Stomach (tissue), 19 donors: ENCODE measurements at regions of chr13 and their contacts with region 1.

Region 1: DNA sequence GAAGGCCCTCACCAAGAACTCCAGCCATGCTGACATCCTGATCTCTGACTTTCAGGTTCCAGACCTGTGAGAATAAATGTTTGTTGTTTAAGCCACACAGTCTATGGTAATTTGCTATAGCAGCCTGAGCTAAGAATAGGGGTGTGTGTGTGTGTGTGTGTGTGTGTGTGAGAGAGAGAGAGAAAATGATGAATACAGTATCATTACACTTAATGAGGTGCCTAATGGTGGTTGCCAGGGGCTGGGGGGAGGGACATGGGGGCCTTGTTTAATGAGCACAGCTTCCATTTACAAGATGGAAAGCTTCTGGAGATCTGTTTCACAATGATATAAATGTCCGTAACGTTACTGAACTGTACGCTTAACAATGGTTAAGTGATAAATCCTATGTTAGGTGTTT is 53.8 kb upstream of the LATS2 start:
- DNase-seq: peak in 1 of 2 donors; percentile 21
- H3K4me3 ChIP-seq: no peak overlapping the region
- H3K27ac ChIP-seq: no peak overlapping the region
- H3K4me1 ChIP-seq: no peaks in the 10 kb centered on the region
- H3K27me3 ChIP-seq: no peaks in the 10 kb centered on the region
- CTCF ChIP-seq: no peak
- EP300 ChIP-seq: no peak
- POLR2A ChIP-seq: no peak

Region 2: GRCh38 chr13:20945952-20946383 is 169.3 kb before region 1 on chr13:
- intact Hi-C with region 1: loop called (anchors 10 kb)
- DNase-seq: peak in 1 of 2 donors; percentile 54
- H3K4me3 ChIP-seq: peak overlapping the region in 3 of 4 donors; percentile 19 to 26 (median 25)
- H3K27ac ChIP-seq: no peak overlapping the region
- H3K4me1 ChIP-seq: peaks cover 7 to 21% (median 13%) of the 10 kb centered on the region in 4 donors
- H3K27me3 ChIP-seq: peaks cover 0 to 17% (median 10%) of the 10 kb centered on the region in 3 donors
- CTCF ChIP-seq: no peak
- EP300 ChIP-seq: no peak
- POLR2A ChIP-seq: no peak

Region 3: DNA sequence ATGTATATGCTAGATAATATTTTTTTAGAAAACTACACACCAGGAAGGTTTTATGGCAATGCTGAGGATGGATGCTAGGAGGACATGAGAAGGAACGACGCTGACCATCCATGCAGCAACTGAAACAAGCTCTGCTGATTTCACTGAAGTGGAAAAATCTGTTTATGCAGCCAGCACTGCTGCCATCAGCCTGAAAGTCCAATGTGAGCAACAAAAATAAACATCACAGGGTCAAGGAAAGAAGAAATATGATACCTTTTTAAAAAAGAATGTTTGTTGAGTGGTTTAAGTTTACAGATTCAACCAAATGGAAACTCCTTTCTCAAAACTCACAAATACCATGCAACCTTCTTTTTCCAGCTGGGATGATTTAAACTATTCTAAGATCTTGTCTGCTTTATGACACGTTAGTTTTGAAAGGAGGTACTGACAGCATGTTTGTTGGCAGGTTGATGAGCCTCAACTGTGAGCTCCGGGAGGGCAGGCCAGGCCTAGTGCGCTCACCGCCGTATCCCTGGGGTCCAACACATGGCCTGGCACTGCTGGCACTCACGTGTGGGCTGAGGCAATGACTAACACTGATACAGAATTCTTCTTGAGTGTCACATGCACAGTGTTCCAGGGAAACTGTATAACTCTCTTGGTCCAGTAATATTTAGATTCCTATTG is 100.6 kb before region 1 on chr13:
- intact Hi-C with region 1: no loop called
- DNase-seq: peak in 1 of 2 donors; percentile 40
- H3K4me3 ChIP-seq: no peak overlapping the region
- H3K27ac ChIP-seq: peak overlapping the region in 4 of 5 donors; percentile 27 to 79 (median 44)
- H3K4me1 ChIP-seq: peaks cover 45 to 84% (median 66%) of the 10 kb centered on the region in 4 donors
- H3K27me3 ChIP-seq: no peaks in the 10 kb centered on the region
- CTCF ChIP-seq: no peak
- EP300 ChIP-seq: no peak
- POLR2A ChIP-seq: no peak

Region 4: GRCh38 chr13:21486322-21486721 is 371.1 kb after region 1 on chr13:
- intact Hi-C with region 1: no loop called
- DNase-seq: no peak
- H3K4me3 ChIP-seq: no peak overlapping the region
- H3K27ac ChIP-seq: no peak overlapping the region
- H3K4me1 ChIP-seq: no peaks in the 10 kb centered on the region
- H3K27me3 ChIP-seq: no peaks in the 10 kb centered on the region
- CTCF ChIP-seq: no peak
- EP300 ChIP-seq: no peak
- POLR2A ChIP-seq: no peak